PC-3 (cell line): ENCODE measurements at regions of chr6 and their contacts with region 1.

Region 1: DNA sequence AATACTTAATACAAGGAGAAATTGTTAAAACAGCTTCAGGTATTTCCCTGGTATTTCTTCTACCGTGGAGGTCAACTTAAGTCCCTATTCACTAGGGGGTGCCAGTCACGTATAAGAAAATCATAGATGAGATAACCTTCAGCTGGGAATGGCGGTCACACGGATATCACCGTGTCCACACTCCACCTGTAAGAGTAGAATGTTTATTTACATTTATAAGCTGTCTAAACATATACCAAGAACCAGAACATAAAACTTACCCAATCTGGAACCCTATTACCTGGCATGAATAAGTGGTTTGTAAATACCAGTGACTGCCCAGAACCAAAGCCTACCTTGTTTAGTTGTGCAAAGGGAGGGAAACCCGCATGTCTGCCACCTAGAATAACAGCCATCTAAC is 1.9 kb upstream of the ELOVL4 start:
- DNase-seq: peak; percentile 66
- ATAC-seq: no peak
- H3K4me3 ChIP-seq: peak overlapping the region; percentile 47; the same call in 1 of the 2 replicates
- H3K27ac ChIP-seq: no peak overlapping the region
- H3K4me1 ChIP-seq: peaks cover 30% of the 10 kb centered on the region
- H3K27me3 ChIP-seq: no peaks in the 10 kb centered on the region
- CTCF ChIP-seq: peak; percentile 76

Region 2: DNA sequence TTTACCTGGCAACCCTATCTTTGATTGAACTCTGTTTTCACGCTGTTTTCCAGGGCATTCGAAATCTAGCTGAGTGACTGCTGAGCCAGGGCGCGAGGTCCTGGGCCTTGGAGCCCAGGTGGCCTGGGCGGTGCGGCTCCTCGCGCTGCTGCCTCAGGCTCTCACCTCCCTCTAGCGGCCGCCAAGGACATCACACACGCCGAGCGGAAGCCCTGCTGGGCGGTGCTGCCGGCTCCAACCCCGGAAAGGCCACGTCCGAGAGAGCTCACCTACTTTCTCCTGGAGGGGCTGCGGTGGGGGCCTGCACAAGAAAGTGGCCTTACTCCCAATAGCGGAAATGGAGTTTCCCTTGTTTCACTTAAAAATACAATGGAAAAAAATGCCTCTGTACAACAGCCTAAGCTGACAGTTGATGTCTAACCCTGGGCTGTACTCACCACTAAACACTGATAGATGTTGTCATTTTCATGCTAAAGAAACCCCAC is 79.6 kb before region 1 on chr6:
- CTCF ChIA-PET with region 1: interaction called, 3 read pairs
- POLR2A ChIA-PET with region 1: no interaction called
- intact Hi-C with region 1: loop called (anchors 5 kb)
- DNase-seq: peak; percentile 71
- ATAC-seq: peak; percentile 98
- H3K4me3 ChIP-seq: peak overlapping the region; percentile 39; the same call in 1 of the 2 replicates
- H3K27ac ChIP-seq: no peak overlapping the region
- H3K4me1 ChIP-seq: 0 out of 2 replicates have a peak, but pooled peaks cover 6% of the 10 kb centered on the region
- H3K27me3 ChIP-seq: no peaks in the 10 kb centered on the region
- CTCF ChIP-seq: peak; percentile 75

Region 3: DNA sequence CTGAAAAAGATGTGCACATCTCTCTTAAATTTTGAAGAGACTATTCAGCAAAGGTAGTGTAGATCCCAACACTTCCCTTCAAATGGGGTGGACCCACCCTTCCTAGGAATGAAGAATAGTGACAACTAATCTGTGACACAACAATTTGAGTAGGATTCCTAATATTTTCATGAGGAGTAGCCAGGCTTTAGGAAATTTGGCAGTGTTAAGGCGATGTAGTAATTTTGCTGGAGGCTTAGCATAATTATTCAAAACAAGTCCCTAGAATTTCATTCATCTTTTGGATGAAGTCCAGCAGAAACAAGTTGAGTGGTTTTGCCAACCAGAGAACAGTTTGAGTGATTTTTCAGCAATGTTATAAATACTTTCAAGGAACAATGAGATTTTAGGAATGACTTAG is 54.3 kb before region 1 on chr6:
- CTCF ChIA-PET with region 1: no interaction called
- POLR2A ChIA-PET with region 1: no interaction called
- intact Hi-C with region 1: loop called (anchors 2 kb)
- DNase-seq: peak; percentile 59
- ATAC-seq: peak; percentile 13; the same call in 1 of the 2 replicates
- H3K4me3 ChIP-seq: no peak overlapping the region
- H3K27ac ChIP-seq: peak overlapping the region; percentile 71
- H3K4me1 ChIP-seq: peaks cover 22% of the 10 kb centered on the region
- H3K27me3 ChIP-seq: no peaks in the 10 kb centered on the region
- CTCF ChIP-seq: no peak

Region 4: GRCh38 chr6:79928478-79928998 is 20.7 kb before region 1 on chr6:
- CTCF ChIA-PET with region 1: no interaction called
- POLR2A ChIA-PET with region 1: no interaction called
- intact Hi-C with region 1: no loop called
- DNase-seq: no peak
- ATAC-seq: no peak
- H3K4me3 ChIP-seq: no peak overlapping the region
- H3K27ac ChIP-seq: no peak overlapping the region
- H3K4me1 ChIP-seq: no peaks in the 10 kb centered on the region
- H3K27me3 ChIP-seq: no peaks in the 10 kb centered on the region
- CTCF ChIP-seq: no peak

Region 5: GRCh38 chr6:80004173-80005072 is 55.2 kb after region 1 on chr6 and contains the start of gene TTK:
- CTCF ChIA-PET with region 1: interaction called, 3 read pairs
- POLR2A ChIA-PET with region 1: no interaction called
- intact Hi-C with region 1: loop called (anchors 2 kb)
- DNase-seq: peak; percentile 91
- ATAC-seq: peak; percentile 95
- H3K4me3 ChIP-seq: peak within 1 kb of the TSS; percentile 90
- H3K27ac ChIP-seq: peak within 1 kb of the TSS; percentile 51
- H3K4me1 ChIP-seq: peaks cover 19% of the 10 kb centered on the region
- H3K27me3 ChIP-seq: no peaks in the 10 kb centered on the region
- CTCF ChIP-seq: no peak
- total RNA-seq, gene TTK: 38.9 and 39.0 TPM in 2 replicates

Region 6: GRCh38 chr6:80094017-80094416 is 144.8 kb after region 1 on chr6:
- CTCF ChIA-PET with region 1: no interaction called
- POLR2A ChIA-PET with region 1: no interaction called
- intact Hi-C with region 1: loop called (anchors 1 kb)
- DNase-seq: peak; percentile 49
- ATAC-seq: no peak; the same call in 1 of the 2 replicates
- H3K4me3 ChIP-seq: no peak overlapping the region
- H3K27ac ChIP-seq: no peak overlapping the region
- H3K4me1 ChIP-seq: no peaks in the 10 kb centered on the region
- H3K27me3 ChIP-seq: no peaks in the 10 kb centered on the region
- CTCF ChIP-seq: peak; percentile 62

Region 7: GRCh38 chr6:80106418-80107235 is 157.4 kb after region 1 on chr6 and contains the start of gene BCKDHB:
- CTCF ChIA-PET with region 1: interaction called, 4 read pairs
- POLR2A ChIA-PET with region 1: no interaction called
- intact Hi-C with region 1: loop called (anchors 5 kb)
- DNase-seq: peak; percentile 96
- ATAC-seq: peak; percentile 97
- H3K4me3 ChIP-seq: peak within 1 kb of the TSS; percentile 84
- H3K27ac ChIP-seq: peak within 1 kb of the TSS; percentile 56
- H3K4me1 ChIP-seq: peaks cover 7% of the 10 kb centered on the region; the same call in 1 of the 2 replicates
- H3K27me3 ChIP-seq: no peaks in the 10 kb centered on the region
- CTCF ChIP-seq: no peak
- total RNA-seq, gene BCKDHB: 9.9 and 12.7 TPM in 2 replicates